ENCODE measurements at regions of chr2 and their contacts with region 1.

Region 1: DNA sequence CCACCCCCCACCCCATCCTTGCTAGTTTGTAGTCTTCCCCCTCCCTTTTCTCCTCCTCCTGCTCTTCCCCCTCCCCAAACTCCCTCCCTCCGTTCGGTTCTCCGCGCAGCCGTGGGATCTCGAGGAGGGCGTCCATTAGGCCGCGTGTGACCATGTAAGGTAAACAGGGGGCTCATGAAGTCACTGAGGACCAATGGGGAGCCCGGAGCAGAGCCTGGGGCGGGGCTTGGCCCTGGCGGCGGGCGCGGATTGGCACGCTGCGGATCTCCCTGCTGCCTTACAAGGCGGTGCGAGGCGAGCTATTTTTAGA is 246 bp upstream of the KLF7 start:
- DNase-seq: peak; percentile 98
- H3K4me3 Mint-ChIP-seq: peak overlapping the region; percentile 98
- H3K27ac Mint-ChIP-seq: peak overlapping the region; percentile 97
- H3K4me1 Mint-ChIP-seq: peaks cover 59% of the 10 kb centered on the region
- H3K27me3 Mint-ChIP-seq: no peaks in the 10 kb centered on the region

Region 2: DNA sequence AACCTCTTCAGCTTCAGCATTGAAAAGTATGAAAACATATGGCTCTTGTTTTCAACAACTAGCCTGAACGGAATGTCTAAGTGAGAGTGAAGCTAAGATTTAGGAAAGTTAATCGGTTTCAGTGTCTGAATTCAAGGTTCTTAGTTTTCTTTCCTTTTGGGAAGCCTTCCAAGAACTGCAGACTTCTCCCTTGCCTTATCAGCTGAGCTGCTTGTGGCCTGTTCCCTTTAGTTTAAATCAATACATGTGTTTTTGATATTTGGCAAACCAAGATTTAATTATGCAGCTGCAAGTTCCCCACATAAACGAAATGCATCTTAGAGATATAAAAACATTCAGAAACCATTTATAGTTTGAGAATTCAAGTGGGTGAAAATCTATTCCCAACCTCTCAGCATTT is 1758.0 kb before region 1 on chr2:
- intact Hi-C with region 1: no loop called
- DNase-seq: no peak
- H3K4me3 Mint-ChIP-seq: no peak overlapping the region
- H3K27ac Mint-ChIP-seq: no peak overlapping the region
- H3K4me1 Mint-ChIP-seq: no peaks in the 10 kb centered on the region
- H3K27me3 Mint-ChIP-seq: no peaks in the 10 kb centered on the region

Region 3: GRCh38 chr2:206800506-206801417 is 365.2 kb before region 1 on chr2:
- intact Hi-C with region 1: loop called (anchors 5 kb)
- DNase-seq: peak; percentile 28
- H3K4me3 Mint-ChIP-seq: peak overlapping the region; percentile 49
- H3K27ac Mint-ChIP-seq: peak overlapping the region; percentile 61
- H3K4me1 Mint-ChIP-seq: peaks cover 20% of the 10 kb centered on the region
- H3K27me3 Mint-ChIP-seq: no peaks in the 10 kb centered on the region

Region 4: DNA sequence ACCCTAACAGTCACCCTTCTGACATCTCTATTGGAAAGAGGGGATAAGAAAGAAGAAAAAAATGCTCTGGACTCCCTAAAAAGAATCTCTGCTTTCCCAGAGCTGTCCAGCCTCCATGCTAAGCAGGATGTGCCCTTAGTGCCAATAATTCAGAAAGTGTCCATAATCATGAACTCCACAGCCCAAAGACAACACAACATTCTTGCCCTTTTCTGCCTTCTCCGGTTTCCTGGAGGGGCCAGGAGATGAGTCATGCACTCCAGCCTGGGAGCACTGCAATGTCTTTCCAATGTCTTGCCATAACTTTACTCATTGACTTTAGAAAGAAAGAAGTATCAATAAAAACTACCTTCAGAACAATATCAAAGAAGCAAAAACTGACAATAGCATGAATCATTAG is 44.2 kb before region 1 on chr2:
- intact Hi-C with region 1: loop called (anchors 1 kb)
- DNase-seq: no peak
- H3K4me3 Mint-ChIP-seq: no peak overlapping the region
- H3K27ac Mint-ChIP-seq: no peak overlapping the region
- H3K4me1 Mint-ChIP-seq: peaks cover 46% of the 10 kb centered on the region
- H3K27me3 Mint-ChIP-seq: no peaks in the 10 kb centered on the region

Region 5: GRCh38 chr2:207223051-207223450 is 57.1 kb after region 1 on chr2:
- intact Hi-C with region 1: loop called (anchors 1 kb)
- DNase-seq: no peak
- H3K4me3 Mint-ChIP-seq: peak overlapping the region; percentile 60
- H3K27ac Mint-ChIP-seq: peak overlapping the region; percentile 84
- H3K4me1 Mint-ChIP-seq: peaks cover 46% of the 10 kb centered on the region
- H3K27me3 Mint-ChIP-seq: peaks cover 6% of the 10 kb centered on the region

Region 6: GRCh38 chr2:207311316-207312005 is 145.5 kb after region 1 on chr2:
- intact Hi-C with region 1: loop called (anchors 1 kb)
- DNase-seq: no peak
- H3K4me3 Mint-ChIP-seq: no peak overlapping the region
- H3K27ac Mint-ChIP-seq: peak overlapping the region; percentile 88
- H3K4me1 Mint-ChIP-seq: peaks cover 49% of the 10 kb centered on the region
- H3K27me3 Mint-ChIP-seq: no peaks in the 10 kb centered on the region

Region 7: DNA sequence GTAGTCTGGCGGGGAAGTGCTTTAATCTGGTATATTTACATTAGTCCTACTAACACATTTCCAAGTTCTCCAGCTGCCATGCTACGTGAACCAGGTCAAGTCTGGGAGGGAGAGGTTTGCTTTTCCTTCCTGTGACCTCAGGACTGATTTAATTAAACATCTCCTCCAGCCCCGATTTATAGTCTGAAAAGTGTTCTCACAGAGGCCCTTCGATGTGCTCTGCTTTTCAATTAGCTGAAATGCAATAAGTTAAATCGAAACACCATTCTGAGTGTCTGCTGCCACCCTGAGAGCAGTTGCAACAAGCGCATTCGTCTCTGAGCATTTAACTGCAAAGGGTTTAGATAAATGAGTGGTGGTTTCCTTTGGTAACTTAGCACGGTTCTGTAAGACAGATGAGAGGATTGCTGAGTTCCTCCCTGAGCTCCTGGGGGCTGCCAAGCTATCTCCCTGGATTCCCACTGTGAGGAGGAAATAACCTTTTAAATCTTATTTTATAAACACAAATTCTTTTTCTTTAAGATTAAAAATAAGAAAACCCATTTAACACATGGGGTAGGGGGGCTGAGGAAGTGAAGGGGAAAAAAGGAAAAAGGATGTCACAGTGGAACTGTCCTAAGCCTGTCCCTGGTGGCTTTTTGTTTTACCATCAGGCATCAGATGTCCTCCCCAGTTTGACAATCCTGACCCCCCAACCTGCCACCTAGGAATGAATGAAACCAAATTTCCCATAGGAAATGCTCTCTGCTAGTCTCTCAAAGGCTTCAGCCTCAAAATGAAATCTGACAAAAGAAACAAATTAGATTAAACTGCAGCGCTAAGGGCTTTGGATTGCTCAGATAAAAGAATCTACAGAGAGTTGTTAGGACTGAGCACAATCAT is 307.3 kb after region 1 on chr2:
- intact Hi-C with region 1: loop called (anchors 1 kb)
- DNase-seq: peak; percentile 47
- H3K4me3 Mint-ChIP-seq: no peak overlapping the region
- H3K27ac Mint-ChIP-seq: no peak overlapping the region
- H3K4me1 Mint-ChIP-seq: peaks cover 26% of the 10 kb centered on the region
- H3K27me3 Mint-ChIP-seq: no peaks in the 10 kb centered on the region

Region 8: GRCh38 chr2:207710814-207711740 is 545.1 kb after region 1 on chr2 and contains the start of gene CCNYL1:
- intact Hi-C with region 1: loop called (anchors 5 kb)
- DNase-seq: peak; percentile 98
- H3K4me3 Mint-ChIP-seq: peak within 1 kb of the TSS; percentile 96
- H3K27ac Mint-ChIP-seq: peak within 1 kb of the TSS; percentile 76
- H3K4me1 Mint-ChIP-seq: peaks cover 36% of the 10 kb centered on the region
- H3K27me3 Mint-ChIP-seq: no peaks in the 10 kb centered on the region
- total RNA-seq, gene CCNYL1: 6.8 and 8.7 TPM in 2 replicates

Measured in activated T-helper 1 cell treated with anti-CD3 and anti-CD28 coated beads, Interleukin-12 subunit alpha, Interleukin-12 subunit beta, Interleukin-2, Interleukin-4 antibody, amounts not matched to agents 30 ng/mL and 10 ng/mL and 1 ng/mL, durations not matched to agents 14 hours and 24 hours and 36 hours (primary cell).